Heart left ventricle (tissue), 16 donors: ENCODE measurements at regions of chr10 and their contacts with region 1.

Region 1: DNA sequence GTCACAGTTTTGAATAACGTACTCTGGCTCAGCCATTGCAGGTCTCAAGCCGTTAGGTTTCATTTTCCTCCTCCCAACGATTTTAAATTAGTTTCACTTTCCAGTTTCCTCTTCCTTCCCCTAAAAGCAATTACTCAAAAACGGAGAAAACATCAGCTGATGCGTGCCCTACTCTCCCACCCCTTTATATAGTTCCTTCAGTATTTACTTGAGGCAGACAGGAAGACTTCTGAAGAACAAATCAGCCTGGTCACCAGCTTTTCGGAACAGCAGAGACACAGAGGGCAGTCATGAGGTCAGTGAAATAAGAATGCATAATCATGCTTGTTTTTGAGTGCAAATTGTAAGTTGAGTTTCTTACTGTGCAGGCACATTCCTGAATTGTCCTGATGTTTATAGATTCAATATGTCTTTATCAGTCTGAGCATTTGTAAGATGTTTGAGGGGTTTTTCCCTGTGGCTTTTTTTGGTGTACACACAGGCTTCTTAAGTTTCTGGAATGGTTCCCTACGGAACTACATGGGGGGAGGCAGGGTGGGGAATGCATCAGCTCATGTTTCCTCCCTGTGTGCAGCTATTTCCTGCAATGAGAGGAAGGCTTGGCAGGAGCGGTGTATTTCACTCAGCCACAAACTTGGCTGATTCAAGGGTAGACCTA is at the start of gene IFIT3:
- DNase-seq: peak in 4 of 5 donors; percentile 76 to 85 (median 80)
- ATAC-seq: peak; percentile 91 to 95 (median 95)
- H3K4me3 ChIP-seq: peak within 1 kb of the TSS; percentile 12 to 62 (median 50)
- H3K27ac ChIP-seq: peak within 1 kb of the TSS; percentile 82 to 94 (median 90)
- H3K4me1 ChIP-seq: peaks cover 0 to 68% (median 31%) of the 10 kb centered on the region in 12 donors
- H3K27me3 ChIP-seq: no peaks in the 10 kb centered on the region
- CTCF ChIP-seq: no peak
- POLR2A ChIP-seq: no peak
- total RNA-seq, gene IFIT3: 4.4 to 107 (median 12.1) TPM

Region 2: GRCh38 chr10:89224739-89225443 is 103.0 kb before region 1 on chr10:
- intact Hi-C with region 1: no loop called
- DNase-seq: peak; percentile 45 to 72 (median 55)
- ATAC-seq: peak; percentile 60 to 85 (median 63)
- H3K4me3 ChIP-seq: peak overlapping the region in 8 of 12 donors; percentile 11 to 42 (median 33)
- H3K27ac ChIP-seq: peak overlapping the region; percentile 56 to 89 (median 78)
- H3K4me1 ChIP-seq: peaks cover 0 to 15% (median 0%) of the 10 kb centered on the region in 12 donors
- H3K27me3 ChIP-seq: no peaks in the 10 kb centered on the region
- CTCF ChIP-seq: peak in 10 of 12 donors; percentile 17 to 70 (median 36)
- POLR2A ChIP-seq: no peak

Region 3: DNA sequence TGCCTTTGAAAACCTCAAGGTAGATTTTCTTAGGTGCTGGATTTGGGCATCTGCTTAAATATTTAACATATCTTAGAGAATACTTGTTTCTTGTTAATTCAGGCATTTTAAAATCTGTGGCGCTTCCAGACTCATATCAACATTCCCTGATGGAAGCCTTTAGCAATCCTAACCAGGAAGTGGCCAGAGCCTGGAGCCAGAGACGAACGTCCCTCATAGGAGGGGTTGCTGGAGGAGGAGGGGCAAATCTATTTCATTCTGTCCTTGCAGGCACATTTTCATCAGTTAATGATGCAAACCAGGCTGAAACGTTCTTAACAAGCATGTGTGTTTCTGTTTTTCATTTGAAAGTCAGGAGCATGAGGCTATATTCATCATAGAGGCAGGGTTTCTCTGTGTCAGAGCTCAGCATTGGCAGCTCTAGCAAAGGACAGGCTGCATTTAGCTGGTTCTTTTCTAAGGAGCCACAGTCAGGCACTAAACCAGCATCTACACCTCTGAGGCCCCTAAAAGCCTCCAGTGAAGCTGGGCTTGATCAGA is 43.9 kb before region 1 on chr10:
- intact Hi-C with region 1: loop called in 1 of 10 experiments (anchors 5 kb)
- DNase-seq: peak; percentile 59 to 74 (median 65)
- ATAC-seq: peak; percentile 87 to 95 (median 94)
- H3K4me3 ChIP-seq: peak overlapping the region in 9 of 12 donors; percentile 23 to 52 (median 36)
- H3K27ac ChIP-seq: peak overlapping the region; percentile 65 to 90 (median 82)
- H3K4me1 ChIP-seq: peaks cover 0 to 41% (median 27%) of the 10 kb centered on the region in 12 donors
- H3K27me3 ChIP-seq: no peaks in the 10 kb centered on the region
- CTCF ChIP-seq: no peak
- POLR2A ChIP-seq: no peak

Region 4: DNA sequence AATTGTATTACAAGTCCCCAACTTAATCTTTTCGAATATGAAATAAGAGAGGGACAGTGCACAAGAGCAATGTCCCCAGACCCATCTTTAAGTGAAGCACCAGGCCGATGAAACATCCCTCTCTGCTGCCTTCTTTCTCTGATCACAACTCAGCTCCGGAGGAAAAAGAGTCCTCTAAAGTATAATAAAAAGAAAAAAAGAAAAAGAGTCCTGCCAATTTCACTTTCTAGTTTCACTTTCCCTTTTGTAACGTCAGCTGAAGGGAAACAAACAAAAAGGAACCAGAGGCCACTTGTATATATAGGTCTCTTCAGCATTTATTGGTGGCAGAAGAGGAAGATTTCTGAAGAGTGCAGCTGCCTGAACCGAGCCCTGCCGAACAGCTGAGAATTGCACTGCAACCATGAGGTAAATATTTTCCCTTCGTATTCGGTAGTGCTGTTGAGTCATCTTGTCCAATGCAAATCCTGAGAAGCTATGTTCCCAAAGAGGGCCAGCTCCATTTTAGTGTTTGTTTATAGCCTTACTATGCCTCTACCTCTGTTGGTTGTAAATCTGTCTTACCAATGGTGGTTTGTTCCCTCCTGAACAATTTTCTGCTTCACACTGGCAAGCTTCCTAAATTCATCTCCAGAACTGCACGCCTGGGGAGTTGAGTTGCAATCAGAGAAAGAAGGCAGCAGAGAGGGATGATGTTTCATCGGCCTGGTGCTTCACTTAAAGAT is 26.0 kb before region 1 on chr10 and contains the start of gene IFIT2:
- intact Hi-C with region 1: loop called in 1 of 10 experiments (anchors 2 kb)
- DNase-seq: peak; percentile 35 to 58 (median 44)
- ATAC-seq: peak; percentile 67 to 86 (median 82)
- H3K4me3 ChIP-seq: peak within 1 kb of the TSS; percentile 20 to 71 (median 56)
- H3K27ac ChIP-seq: peak within 1 kb of the TSS; percentile 74 to 97 (median 90)
- H3K4me1 ChIP-seq: peaks cover 0 to 50% (median 22%) of the 10 kb centered on the region in 12 donors
- H3K27me3 ChIP-seq: no peaks in the 10 kb centered on the region
- CTCF ChIP-seq: no peak
- POLR2A ChIP-seq: peak in 1 of 2 donors; percentile 42
- total RNA-seq, gene IFIT2: 2.3 to 30.2 (median 5.3) TPM

Region 5: GRCh38 chr10:89369156-89370105 is 41.5 kb after region 1 on chr10:
- intact Hi-C with region 1: loop called in 1 of 10 experiments (anchors 5 kb)
- DNase-seq: no peak
- ATAC-seq: peak; percentile 9 to 58 (median 32)
- H3K4me3 ChIP-seq: no peak overlapping the region
- H3K27ac ChIP-seq: peak overlapping the region in 2 of 12 donors; percentile 39 to 44
- H3K4me1 ChIP-seq: peaks cover 6 to 42% (median 23%) of the 10 kb centered on the region in 12 donors
- H3K27me3 ChIP-seq: no peaks in the 10 kb centered on the region
- CTCF ChIP-seq: peak in 11 of 12 donors; percentile 23 to 69 (median 52)
- POLR2A ChIP-seq: no peak

Region 6: GRCh38 chr10:89414146-89414878 is 86.4 kb after region 1 on chr10 and contains the start of gene IFIT5:
- intact Hi-C with region 1: loop called in 2 of 10 experiments (anchors 2 to 5 kb)
- DNase-seq: peak; percentile 74 to 87 (median 78)
- ATAC-seq: peak; percentile 79 to 95 (median 92)
- H3K4me3 ChIP-seq: peak within 1 kb of the TSS; percentile 75 to 95 (median 86)
- H3K27ac ChIP-seq: peak within 1 kb of the TSS; percentile 92 to 99 (median 96)
- H3K4me1 ChIP-seq: peaks cover 0 to 53% (median 33%) of the 10 kb centered on the region in 12 donors
- H3K27me3 ChIP-seq: no peaks in the 10 kb centered on the region
- CTCF ChIP-seq: peak in 3 of 12 donors; percentile 23 to 30 (median 25)
- POLR2A ChIP-seq: peak in 1 of 2 donors; percentile 38
- total RNA-seq, gene IFIT5: 5.4 to 21.0 (median 10.4) TPM